Head of caudate nucleus (tissue), 42 donors: ENCODE measurements at regions of chr5 and their contacts with region 1.

Region 1: GRCh38 chr5:83473346-83474163 is 2.0 kb downstream of the VCAN start:
- DNase-seq: peak; percentile 75 to 93 (median 85)

Region 2: GRCh38 chr5:82351754-82352145 is 1121.8 kb before region 1 on chr5:
- intact Hi-C with region 1: loop called (anchors 5 kb)
- DNase-seq: peak in 10 of 42 donors; percentile 23 to 73 (median 38)